PC-9 (cell line): ENCODE measurements at regions of chrX and their contacts with region 1.

Region 1: GRCh38 chrX:116232804-116233203 is 62.3 kb downstream of the AGTR2 start:
- DNase-seq: peak in 1 of 2 experiments; percentile 95
- H3K4me3 ChIP-seq: no peak overlapping the region
- H3K27ac ChIP-seq: peak overlapping the region; percentile 60
- H3K4me1 ChIP-seq: peaks cover 47% of the 10 kb centered on the region
- H3K27me3 ChIP-seq: no peaks in the 10 kb centered on the region
- CTCF ChIP-seq: no peak

Region 2: DNA sequence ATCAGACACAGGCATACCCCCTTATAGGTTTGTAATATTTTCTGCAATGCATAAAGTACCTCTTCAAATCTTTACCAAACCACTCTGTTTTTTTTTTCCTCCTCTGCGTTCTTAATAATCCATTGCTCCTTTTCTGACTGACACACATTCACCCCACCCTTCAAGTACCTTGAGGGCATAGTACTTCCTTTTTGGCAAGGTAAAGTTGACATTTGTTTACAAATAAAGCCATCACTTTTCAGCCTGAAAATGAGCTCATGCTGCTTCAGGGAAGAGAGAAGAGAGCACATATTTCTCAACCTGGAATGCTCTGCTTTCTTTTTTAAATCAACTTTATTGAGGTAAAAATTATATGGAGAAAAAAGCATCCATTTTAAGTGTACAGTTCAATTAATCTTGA is 51.6 kb after region 1 on chrX:
- CTCF ChIA-PET with region 1: no interaction called
- POLR2A ChIA-PET with region 1: no interaction called
- intact Hi-C with region 1: loop called (anchors 2 kb)
- DNase-seq: peak; percentile 17 to 89
- H3K4me3 ChIP-seq: no peak overlapping the region
- H3K27ac ChIP-seq: peak overlapping the region; percentile 52
- H3K4me1 ChIP-seq: peaks cover 21% of the 10 kb centered on the region
- H3K27me3 ChIP-seq: no peaks in the 10 kb centered on the region
- CTCF ChIP-seq: no peak